ENCODE measurements at regions of chr20 and their contacts with region 1.

Region 1: GRCh38 chr20:5822569-5822968 is 72.4 kb downstream of the SHLD1 start:
- DNase-seq: no peak
- ATAC-seq: no peak
- H3K4me3 ChIP-seq: no peak overlapping the region
- H3K27ac ChIP-seq: no peak overlapping the region
- H3K4me1 ChIP-seq: 0 out of 2 replicates have a peak, but pooled peaks cover 3% of the 10 kb centered on the region
- H3K27me3 ChIP-seq: no peaks in the 10 kb centered on the region
- CTCF ChIP-seq: no peak

Region 2: DNA sequence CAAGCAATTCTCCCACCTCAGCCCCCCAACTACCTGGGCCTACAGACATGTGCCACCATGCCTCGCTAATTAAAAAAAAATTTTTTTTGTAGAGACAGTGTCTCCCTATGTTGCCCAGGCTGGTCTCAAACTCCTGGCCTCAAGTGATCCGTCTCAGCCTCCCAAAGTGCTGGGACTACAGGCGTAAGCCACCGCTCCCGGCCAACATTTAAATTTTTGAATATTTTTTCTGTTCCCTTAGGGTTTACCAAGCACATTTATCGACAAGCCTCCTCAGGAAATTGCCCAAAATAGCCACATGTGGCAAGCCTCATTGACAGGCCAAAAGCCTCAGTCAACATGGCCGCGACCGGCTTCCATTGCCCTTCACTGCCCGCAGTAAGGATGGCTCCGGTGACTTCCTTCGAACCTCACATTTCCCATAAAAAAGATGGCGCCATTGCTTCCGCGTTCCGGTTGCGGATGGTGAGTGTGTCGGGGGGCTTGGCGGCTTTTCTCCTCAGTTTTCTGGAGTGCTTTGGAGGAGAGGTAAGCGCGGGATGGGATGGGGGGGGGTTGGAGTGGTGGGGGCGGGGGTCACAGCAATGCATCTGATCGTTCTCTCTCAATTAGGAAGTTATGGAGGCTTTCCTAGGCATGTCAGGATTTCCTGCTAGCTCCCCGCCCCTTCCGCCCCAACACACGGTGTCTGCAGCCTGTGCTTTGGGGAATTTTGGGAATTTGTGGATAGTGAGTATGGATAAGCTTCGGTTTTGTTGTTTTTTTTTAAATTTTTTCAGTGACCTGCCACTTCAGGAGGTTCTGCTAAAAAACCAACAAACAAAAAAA is 72.4 kb before region 1 on chr20 and contains the start of gene SHLD1:
- CTCF ChIA-PET with region 1: no interaction called
- POLR2A ChIA-PET with region 1: interaction called, 23 read pairs
- intact Hi-C with region 1: no loop called
- DNase-seq: peak; percentile 90
- ATAC-seq: peak; percentile 93
- H3K4me3 ChIP-seq: peak within 1 kb of the TSS; percentile 83
- H3K27ac ChIP-seq: peak within 1 kb of the TSS; percentile 74
- H3K4me1 ChIP-seq: peaks cover 12% of the 10 kb centered on the region
- H3K27me3 ChIP-seq: no peaks in the 10 kb centered on the region
- CTCF ChIP-seq: no peak
- total RNA-seq, gene SHLD1: 3.4 and 5.1 TPM in 2 replicates

Region 3: DNA sequence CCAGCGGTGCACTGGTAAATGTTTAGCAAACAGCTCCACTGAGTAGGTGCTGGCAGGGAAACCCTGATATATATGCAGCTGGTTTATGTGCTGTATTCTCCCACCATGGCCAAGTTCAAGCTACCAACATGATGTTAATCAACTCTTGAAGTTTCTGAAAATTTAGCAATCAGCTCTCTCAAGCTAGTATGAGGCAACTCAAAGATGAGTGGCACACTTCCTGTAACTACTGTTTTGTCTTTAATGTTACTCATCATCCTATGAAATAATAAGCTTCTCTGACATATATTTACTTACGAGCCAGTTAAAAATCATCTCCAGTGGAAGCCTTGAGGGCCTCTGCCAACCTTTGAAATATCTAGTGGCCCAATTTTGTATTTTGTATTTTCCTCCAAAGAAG is 73.1 kb after region 1 on chr20:
- CTCF ChIA-PET with region 1: no interaction called
- POLR2A ChIA-PET with region 1: no interaction called
- intact Hi-C with region 1: no loop called
- DNase-seq: no peak
- ATAC-seq: no peak
- H3K4me3 ChIP-seq: no peak overlapping the region
- H3K27ac ChIP-seq: no peak overlapping the region
- H3K4me1 ChIP-seq: no peaks in the 10 kb centered on the region
- H3K27me3 ChIP-seq: peaks cover 43% of the 10 kb centered on the region
- CTCF ChIP-seq: no peak

Region 4: GRCh38 chr20:5918856-5919625 is 96.5 kb after region 1 on chr20:
- CTCF ChIA-PET with region 1: interaction called, 15 read pairs
- POLR2A ChIA-PET with region 1: interaction called, 4 read pairs
- intact Hi-C with region 1: no loop called
- DNase-seq: peak; percentile 82
- ATAC-seq: peak; percentile 92
- H3K4me3 ChIP-seq: peak overlapping the region; percentile 21; the same call in 1 of the 2 replicates
- H3K27ac ChIP-seq: peak overlapping the region; percentile 78
- H3K4me1 ChIP-seq: peaks cover 25% of the 10 kb centered on the region
- H3K27me3 ChIP-seq: peaks cover 22% of the 10 kb centered on the region
- CTCF ChIP-seq: no peak

Measured in PC-3 (cell line).